Activated CD4-positive, alpha-beta memory T cell treated with anti-CD3 and anti-CD28 coated beads for 36 hours (primary cell): ENCODE measurements at regions of chr20 and their contacts with region 1.

Region 1: GRCh38 chr20:10090588-10091166 is 55.9 kb downstream of the ANKEF1 start:
- DNase-seq: peak; percentile 18
- H3K4me3 Mint-ChIP-seq: no peak overlapping the region
- H3K27ac Mint-ChIP-seq: no peak overlapping the region
- H3K4me1 Mint-ChIP-seq: no peaks in the 10 kb centered on the region
- H3K27me3 Mint-ChIP-seq: peaks cover 2% of the 10 kb centered on the region

Region 2: GRCh38 chr20:9616833-9617489 is 473.7 kb before region 1 on chr20:
- CTCF ChIA-PET with region 1: interaction called, 32 read pairs
- POLR2A ChIA-PET with region 1: no interaction called
- intact Hi-C with region 1: loop called (anchors 2 kb)
- DNase-seq: peak; percentile 60
- H3K4me3 Mint-ChIP-seq: no peak overlapping the region
- H3K27ac Mint-ChIP-seq: no peak overlapping the region
- H3K4me1 Mint-ChIP-seq: no peaks in the 10 kb centered on the region
- H3K27me3 Mint-ChIP-seq: peaks cover 3% of the 10 kb centered on the region

Region 3: GRCh38 chr20:10077081-10077471 is 13.6 kb before region 1 on chr20:
- CTCF ChIA-PET with region 1: interaction called, 26 read pairs
- POLR2A ChIA-PET with region 1: no interaction called
- intact Hi-C with region 1: no loop called
- DNase-seq: peak; percentile 18
- H3K4me3 Mint-ChIP-seq: no peak overlapping the region
- H3K27ac Mint-ChIP-seq: no peak overlapping the region
- H3K4me1 Mint-ChIP-seq: peaks cover 2% of the 10 kb centered on the region
- H3K27me3 Mint-ChIP-seq: peaks cover 15% of the 10 kb centered on the region

Region 4: GRCh38 chr20:10105046-10105445 is 14.4 kb after region 1 on chr20:
- CTCF ChIA-PET with region 1: interaction called, 12 read pairs
- POLR2A ChIA-PET with region 1: no interaction called
- intact Hi-C with region 1: no loop called
- DNase-seq: no peak
- H3K4me3 Mint-ChIP-seq: no peak overlapping the region
- H3K27ac Mint-ChIP-seq: no peak overlapping the region
- H3K4me1 Mint-ChIP-seq: no peaks in the 10 kb centered on the region
- H3K27me3 Mint-ChIP-seq: no peaks in the 10 kb centered on the region

Region 5: GRCh38 chr20:10219452-10219791 is 128.7 kb after region 1 on chr20:
- CTCF ChIA-PET with region 1: no interaction called
- POLR2A ChIA-PET with region 1: no interaction called
- intact Hi-C with region 1: loop called (anchors 10 kb)
- DNase-seq: peak; percentile 69
- H3K4me3 Mint-ChIP-seq: no peak overlapping the region
- H3K27ac Mint-ChIP-seq: no peak overlapping the region
- H3K4me1 Mint-ChIP-seq: peaks cover 15% of the 10 kb centered on the region
- H3K27me3 Mint-ChIP-seq: peaks cover 45% of the 10 kb centered on the region